Ovary (tissue), 10 donors: ENCODE measurements at regions of chr7 and their contacts with region 1.

Region 1: GRCh38 chr7:271266-272107 is 18.5 kb upstream of the FOXL3 start:
- DNase-seq: no peak
- H3K4me3 ChIP-seq: no peak overlapping the region
- H3K27ac ChIP-seq: no peak overlapping the region
- H3K4me1 ChIP-seq: no peaks in the 10 kb centered on the region
- H3K27me3 ChIP-seq: no peaks in the 10 kb centered on the region
- CTCF ChIP-seq: no peak
- EP300 ChIP-seq: no peak
- POLR2A ChIP-seq: no peak

Region 2: DNA sequence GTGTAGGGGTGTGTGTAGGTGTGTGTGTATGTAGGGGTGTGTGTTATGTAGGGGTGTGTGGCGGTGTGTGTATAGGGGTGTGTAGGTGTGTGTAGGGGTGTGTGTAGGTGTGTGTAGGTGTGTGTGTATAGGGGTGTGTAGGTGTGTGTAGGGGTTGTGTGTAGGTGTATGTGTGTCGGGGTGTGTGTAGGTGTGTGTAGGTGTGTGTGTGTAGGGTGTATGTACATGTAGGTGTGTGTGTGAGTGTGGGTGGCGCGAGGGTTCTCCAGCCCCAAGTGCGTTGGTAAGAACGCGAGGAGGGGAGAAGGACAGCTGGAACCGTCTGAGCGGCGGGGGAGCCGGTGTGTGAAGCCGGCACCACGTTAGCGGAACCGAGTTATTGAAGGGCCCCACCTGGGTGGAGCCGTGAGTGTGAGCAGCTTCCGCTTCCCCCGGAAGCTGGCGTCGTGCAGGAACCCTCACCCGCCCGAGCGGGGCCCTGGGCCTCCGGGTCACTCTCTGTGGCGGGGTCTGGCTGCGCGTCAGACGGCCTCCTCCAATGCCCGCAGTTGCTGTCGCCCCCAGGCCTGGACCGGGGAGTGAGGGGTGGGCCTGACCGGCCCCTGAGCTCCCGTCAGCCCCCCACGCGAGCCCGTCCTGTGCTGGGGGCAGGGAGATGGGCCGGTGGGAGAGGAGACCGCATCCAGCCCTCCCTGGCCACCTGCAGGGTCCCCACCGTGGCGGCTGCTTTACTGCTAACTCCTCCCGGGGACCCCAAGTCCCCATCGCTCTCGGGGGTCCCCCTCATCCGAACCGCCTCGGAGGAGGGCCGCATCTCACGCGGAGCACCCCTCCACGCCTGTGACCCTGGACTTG is 1347.9 kb after region 1 on chr7:
- intact Hi-C with region 1: loop called in 1 of 4 experiments (anchors 5 kb)
- DNase-seq: no peak
- H3K4me3 ChIP-seq: no peak overlapping the region
- H3K27ac ChIP-seq: no peak overlapping the region
- H3K4me1 ChIP-seq: no peaks in the 10 kb centered on the region
- H3K27me3 ChIP-seq: no peaks in the 10 kb centered on the region
- CTCF ChIP-seq: no peak
- EP300 ChIP-seq: no peak
- POLR2A ChIP-seq: no peak